Endothelial cell of umbilical vein (primary cell): ENCODE measurements at regions of chr17 and their contacts with region 1.

Region 1: GRCh38 chr17:78250891-78251794 is 19.7 kb downstream of the TMEM235 start:
- DNase-seq: peak; percentile 78
- H3K4me3 ChIP-seq: no peak overlapping the region
- H3K27ac ChIP-seq: no peak overlapping the region
- H3K4me1 ChIP-seq: peaks cover 4% of the 10 kb centered on the region
- H3K27me3 ChIP-seq: no peaks in the 10 kb centered on the region
- CTCF ChIP-seq: peak; percentile 99 to 100
- POLR2A ChIP-seq: no peak

Region 2: GRCh38 chr17:78082988-78083387 is 168.2 kb before region 1 on chr17:
- CTCF ChIA-PET with region 1: interaction called, 49 read pairs
- POLR2A ChIA-PET with region 1: no interaction called
- dilution Hi-C with region 1: no loop called
- intact Hi-C with region 1: loop called (anchors 1 kb)
- DNase-seq: no peak
- H3K4me3 ChIP-seq: no peak overlapping the region
- H3K27ac ChIP-seq: no peak overlapping the region
- H3K4me1 ChIP-seq: no peaks in the 10 kb centered on the region
- H3K27me3 ChIP-seq: no peaks in the 10 kb centered on the region
- CTCF ChIP-seq: no peak
- POLR2A ChIP-seq: no peak

Region 3: GRCh38 chr17:78128551-78129350 is 122.4 kb before region 1 on chr17 and contains the start of gene TMC6:
- CTCF ChIA-PET with region 1: interaction called, 5 read pairs
- POLR2A ChIA-PET with region 1: no interaction called
- dilution Hi-C with region 1: no loop called
- intact Hi-C with region 1: loop called (anchors 5 kb)
- DNase-seq: peak; percentile 42
- H3K4me3 ChIP-seq: peak within 1 kb of the TSS; percentile 52 to 87 (median 67)
- H3K27ac ChIP-seq: peak within 1 kb of the TSS; percentile 56
- H3K4me1 ChIP-seq: peaks cover 26% of the 10 kb centered on the region
- H3K27me3 ChIP-seq: no peaks in the 10 kb centered on the region
- CTCF ChIP-seq: no peak
- POLR2A ChIP-seq: no peak
- total RNA-seq, gene TMC6: 58.0 and 72.4 TPM in 2 replicates

Region 4: DNA sequence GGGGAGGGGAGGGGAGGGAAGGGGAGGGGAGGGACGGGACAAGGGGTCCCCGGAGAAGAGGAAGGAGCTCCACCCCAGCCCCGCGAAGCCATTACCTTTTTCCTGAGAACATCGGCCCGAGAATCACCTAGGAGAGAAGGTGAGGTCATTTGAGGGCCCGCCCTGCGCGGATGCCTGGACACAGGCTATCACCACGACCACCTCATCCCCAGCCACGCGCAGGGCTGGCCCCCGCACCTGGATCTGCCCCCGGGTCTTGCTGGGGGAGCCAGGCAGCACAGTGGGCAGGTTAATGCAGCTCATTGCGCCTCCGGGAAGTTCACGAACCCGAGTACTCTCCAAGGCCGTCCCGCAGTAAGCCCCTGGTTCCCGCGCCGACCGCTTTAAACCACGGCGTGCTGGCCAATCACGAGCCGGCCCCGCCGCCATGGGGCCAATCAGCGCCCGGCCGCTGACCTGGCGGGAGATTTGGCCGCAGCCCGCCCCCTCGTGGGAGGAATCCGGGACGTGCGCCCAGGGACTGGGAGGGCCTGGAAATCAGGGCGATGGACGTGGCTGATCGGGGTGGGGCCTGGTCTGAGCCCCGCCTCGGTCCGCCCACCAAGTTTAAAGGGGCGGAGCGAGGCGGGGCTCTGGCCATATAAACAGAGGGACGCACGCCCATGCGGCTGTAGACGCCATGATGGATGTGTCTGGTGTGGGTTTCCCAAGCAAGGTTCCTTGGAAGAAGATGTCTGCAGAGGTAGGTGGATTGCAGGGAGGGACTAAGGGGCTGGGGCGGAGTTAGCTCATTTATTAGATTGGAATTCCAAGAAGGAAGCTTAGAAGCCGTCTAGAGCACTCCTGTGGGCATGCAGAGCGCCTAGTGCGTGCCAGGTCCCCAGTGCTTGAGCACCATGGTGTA is 64.2 kb before region 1 on chr17 and contains the starts of genes AFMID and TK1:
- CTCF ChIA-PET with region 1: interaction called, 11 read pairs
- POLR2A ChIA-PET with region 1: no interaction called
- dilution Hi-C with region 1: no loop called
- intact Hi-C with region 1: loop called (anchors 1 kb)
- DNase-seq: peak; percentile 98
- H3K4me3 ChIP-seq: peak within 1 kb of the TSS; percentile 58 to 69 (median 68)
- H3K27ac ChIP-seq: peak within 1 kb of the TSS; percentile 50
- H3K4me1 ChIP-seq: peaks cover 11% of the 10 kb centered on the region
- H3K27me3 ChIP-seq: no peaks in the 10 kb centered on the region
- CTCF ChIP-seq: peak; percentile 77 to 90
- POLR2A ChIP-seq: peak; percentile 91
- total RNA-seq, gene AFMID: 33.5 and 46.3 TPM in 2 replicates
- total RNA-seq, gene TK1: 110 and 111 TPM in 2 replicates

Region 5: DNA sequence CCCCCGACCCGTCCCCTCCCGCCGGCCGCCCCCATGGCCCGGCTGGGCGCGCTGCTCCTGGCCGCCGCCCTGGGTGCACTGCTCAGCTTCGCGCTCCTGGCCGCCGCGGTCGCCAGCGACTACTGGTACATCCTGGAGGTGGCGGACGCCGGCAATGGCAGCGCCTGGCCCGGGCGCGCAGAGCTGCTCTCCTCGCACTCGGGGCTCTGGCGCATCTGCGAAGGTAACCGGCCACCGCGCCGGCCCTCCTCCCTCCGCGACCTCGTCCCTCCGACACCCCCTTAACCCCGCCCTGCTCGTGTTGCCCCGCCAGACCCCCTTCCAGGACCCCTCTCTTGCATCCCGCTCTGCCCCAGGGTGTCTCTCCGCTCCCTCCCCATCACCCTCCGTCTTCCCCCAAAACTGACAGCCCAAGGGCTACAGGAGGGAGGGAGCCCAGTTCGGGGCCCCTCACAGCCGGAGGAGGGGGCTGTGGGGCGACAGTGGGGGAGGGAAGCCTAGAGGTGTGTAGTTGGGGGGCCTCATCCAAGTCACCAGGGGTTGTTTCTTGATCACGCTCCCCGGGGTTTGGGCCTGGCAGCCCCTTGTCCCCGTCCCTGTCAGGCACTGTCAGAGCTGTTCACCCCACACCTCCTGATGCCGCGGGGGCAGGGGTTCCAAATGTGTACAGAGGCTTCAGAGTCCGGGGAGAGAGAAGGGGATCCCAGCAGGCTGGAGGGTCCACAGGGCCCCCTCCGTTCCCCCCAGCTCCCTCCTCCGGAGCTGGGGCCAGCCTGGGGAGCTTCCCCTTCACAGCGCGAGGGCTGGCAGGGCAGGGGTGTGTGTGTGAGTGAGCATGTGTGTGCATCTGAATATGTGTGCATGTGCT is 18.9 kb before region 1 on chr17:
- CTCF ChIA-PET with region 1: interaction called, 39 read pairs
- POLR2A ChIA-PET with region 1: no interaction called
- dilution Hi-C with region 1: no loop called
- intact Hi-C with region 1: no loop called
- DNase-seq: no peak
- H3K4me3 ChIP-seq: no peak overlapping the region
- H3K27ac ChIP-seq: no peak overlapping the region
- H3K4me1 ChIP-seq: peaks cover 5% of the 10 kb centered on the region
- H3K27me3 ChIP-seq: peaks cover 21 to 25% of the 10 kb centered on the region in 2 experiments
- CTCF ChIP-seq: no peak
- POLR2A ChIP-seq: no peak

Region 6: DNA sequence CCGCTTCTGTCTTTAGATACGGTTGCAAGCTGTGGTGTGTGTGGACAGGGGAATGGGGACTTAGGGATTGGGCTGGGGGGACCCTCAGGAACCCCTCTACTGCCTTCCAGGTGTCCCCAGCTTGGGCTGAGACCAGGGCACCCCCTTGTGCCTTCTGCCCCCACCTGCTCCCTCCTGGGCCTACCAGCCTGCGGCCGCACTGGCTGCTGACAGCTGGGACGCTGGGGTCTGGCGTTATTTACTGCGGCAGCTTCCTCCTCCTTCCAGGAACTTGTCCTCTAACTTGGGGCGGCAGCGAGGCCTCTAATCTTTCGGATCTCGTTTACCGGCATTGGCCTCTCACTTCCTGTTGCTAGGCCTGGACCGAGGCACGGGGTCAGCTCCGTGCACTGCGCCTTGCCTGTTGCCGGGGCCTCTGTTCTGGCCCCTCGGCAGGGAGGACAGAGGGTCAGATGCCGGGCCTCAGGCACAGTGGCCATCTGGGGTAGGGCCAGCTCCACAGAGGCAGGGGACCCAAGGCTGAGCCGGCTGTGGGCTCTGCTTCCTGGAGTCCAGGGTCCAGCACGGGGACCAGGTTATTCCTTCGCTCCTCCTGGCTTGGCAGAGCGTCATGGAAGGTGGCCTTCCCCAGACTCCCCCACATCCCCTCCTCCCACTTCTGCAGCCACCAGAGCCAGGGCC is 12.1 kb after region 1 on chr17:
- CTCF ChIA-PET with region 1: interaction called, 23 read pairs
- POLR2A ChIA-PET with region 1: no interaction called
- dilution Hi-C with region 1: no loop called
- intact Hi-C with region 1: no loop called
- DNase-seq: peak; percentile 40
- H3K4me3 ChIP-seq: no peak overlapping the region
- H3K27ac ChIP-seq: no peak overlapping the region
- H3K4me1 ChIP-seq: peaks cover 10% of the 10 kb centered on the region
- H3K27me3 ChIP-seq: no peaks in the 10 kb centered on the region
- CTCF ChIP-seq: no peak
- POLR2A ChIP-seq: no peak

Region 7: DNA sequence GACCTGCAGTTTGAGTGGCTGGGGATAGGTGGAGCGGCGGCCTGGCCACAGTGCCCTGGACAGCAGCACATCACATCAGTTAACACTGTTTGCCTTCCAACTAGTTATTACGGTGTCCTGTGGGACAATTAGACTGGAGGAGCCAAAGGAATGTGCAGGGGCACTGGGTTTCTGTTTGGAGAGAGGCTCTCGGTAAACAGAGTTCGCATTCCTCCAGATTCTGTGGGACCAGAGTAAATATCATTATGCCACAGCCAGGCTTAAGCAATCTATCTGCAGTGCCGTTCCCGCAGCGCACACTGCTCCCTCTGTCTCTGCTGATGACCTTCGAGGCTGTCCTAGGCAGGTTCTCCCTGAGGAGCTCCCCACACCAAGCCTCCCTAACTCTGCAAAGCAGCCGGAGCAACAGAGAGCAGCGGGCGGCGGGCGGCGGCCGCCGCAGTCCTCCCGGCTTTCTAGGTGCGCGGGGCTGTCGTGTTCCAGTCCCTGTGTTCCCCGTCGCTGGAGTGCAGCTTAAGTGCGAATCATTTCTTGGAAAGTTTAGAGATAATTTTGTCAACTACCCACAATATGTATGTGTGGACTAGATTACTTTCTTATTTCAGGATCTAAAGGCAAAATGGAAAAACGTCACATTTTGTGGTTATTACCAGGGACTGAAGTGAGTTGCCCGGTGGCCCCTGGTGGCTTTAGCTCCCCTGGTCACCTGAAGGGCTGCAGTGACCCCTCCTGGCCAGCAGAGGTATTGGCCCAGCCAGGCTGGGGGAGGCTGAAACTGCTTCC is 170.5 kb after region 1 on chr17:
- CTCF ChIA-PET with region 1: interaction called, 59 read pairs
- POLR2A ChIA-PET with region 1: no interaction called
- dilution Hi-C with region 1: no loop called
- intact Hi-C with region 1: loop called (anchors 1 kb)
- DNase-seq: peak; percentile 77
- H3K4me3 ChIP-seq: no peak overlapping the region
- H3K27ac ChIP-seq: no peak overlapping the region
- H3K4me1 ChIP-seq: peaks cover 9% of the 10 kb centered on the region
- H3K27me3 ChIP-seq: no peaks in the 10 kb centered on the region
- CTCF ChIP-seq: peak; percentile 97 to 98
- POLR2A ChIP-seq: no peak